Activated naive CD4-positive, alpha-beta T cell treated with anti-CD3 and anti-CD28 coated beads for 36 hours (primary cell): ENCODE measurements at regions of chr6 and their contacts with region 1.

Region 1: GRCh38 chr6:130781557-130781956 is 45.6 kb upstream of the SMLR1 start:
- DNase-seq: peak; percentile 12
- H3K4me3 Mint-ChIP-seq: no peak overlapping the region
- H3K27ac Mint-ChIP-seq: no peak overlapping the region
- H3K4me1 Mint-ChIP-seq: peaks cover 53% of the 10 kb centered on the region
- H3K27me3 Mint-ChIP-seq: no peaks in the 10 kb centered on the region

Region 2: GRCh38 chr6:130376936-130377335 is 404.6 kb before region 1 on chr6:
- CTCF ChIA-PET with region 1: no interaction called
- intact Hi-C with region 1: no loop called
- DNase-seq: no peak
- H3K4me3 Mint-ChIP-seq: no peak overlapping the region
- H3K27ac Mint-ChIP-seq: no peak overlapping the region
- H3K4me1 Mint-ChIP-seq: peaks cover 8% of the 10 kb centered on the region
- H3K27me3 Mint-ChIP-seq: no peaks in the 10 kb centered on the region

Region 3: DNA sequence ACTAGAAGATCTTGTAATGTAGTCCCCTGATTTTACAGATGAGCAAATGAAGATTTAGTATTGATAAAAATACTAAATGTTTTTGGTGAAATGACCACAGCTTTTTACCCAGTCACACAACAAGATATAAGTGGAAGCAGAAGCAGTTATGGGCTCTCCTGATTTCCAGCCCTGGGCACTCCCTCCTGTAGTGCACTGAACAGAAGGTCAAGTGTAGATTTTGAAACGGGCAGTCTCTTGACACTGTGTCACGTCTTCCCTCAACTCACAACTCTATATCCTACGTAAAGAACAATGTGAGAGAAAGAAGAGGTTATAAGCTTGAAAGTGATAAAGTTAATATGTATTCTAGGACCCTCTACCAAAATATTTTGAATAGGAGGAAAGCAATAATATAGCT is 392.4 kb before region 1 on chr6:
- CTCF ChIA-PET with region 1: no interaction called
- intact Hi-C with region 1: no loop called
- DNase-seq: no peak
- H3K4me3 Mint-ChIP-seq: no peak overlapping the region
- H3K27ac Mint-ChIP-seq: no peak overlapping the region
- H3K4me1 Mint-ChIP-seq: no peaks in the 10 kb centered on the region
- H3K27me3 Mint-ChIP-seq: no peaks in the 10 kb centered on the region

Region 4: GRCh38 chr6:130708338-130708737 is 73.2 kb before region 1 on chr6:
- CTCF ChIA-PET with region 1: no interaction called
- intact Hi-C with region 1: no loop called
- DNase-seq: no peak
- H3K4me3 Mint-ChIP-seq: no peak overlapping the region
- H3K27ac Mint-ChIP-seq: no peak overlapping the region
- H3K4me1 Mint-ChIP-seq: peaks cover 6% of the 10 kb centered on the region
- H3K27me3 Mint-ChIP-seq: no peaks in the 10 kb centered on the region

Region 5: DNA sequence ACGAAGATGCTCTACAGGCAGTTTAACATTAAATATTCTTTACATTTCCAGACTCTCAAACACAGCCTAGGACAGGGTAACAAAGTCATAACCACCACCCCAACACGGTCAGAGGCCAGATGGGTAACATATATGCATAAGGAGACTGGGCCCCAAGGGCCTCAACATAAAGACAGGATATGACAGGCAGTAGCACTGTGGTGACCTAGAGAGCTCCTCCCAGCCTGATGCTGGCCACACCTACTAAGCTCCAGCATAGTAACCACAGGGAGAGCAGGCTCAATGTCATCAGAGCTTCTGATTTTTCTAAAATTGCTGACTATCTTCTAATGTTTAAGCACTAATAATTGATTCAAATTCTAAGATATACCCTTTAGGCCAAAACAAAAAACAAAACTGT is 67.4 kb after region 1 on chr6:
- CTCF ChIA-PET with region 1: no interaction called
- intact Hi-C with region 1: loop called (anchors 2 kb)
- DNase-seq: peak; percentile 52
- H3K4me3 Mint-ChIP-seq: no peak overlapping the region
- H3K27ac Mint-ChIP-seq: no peak overlapping the region
- H3K4me1 Mint-ChIP-seq: peaks cover 3% of the 10 kb centered on the region
- H3K27me3 Mint-ChIP-seq: no peaks in the 10 kb centered on the region